CD8-positive, alpha-beta T cell (primary cell): ENCODE measurements at regions of chr16 and their contacts with region 1.

Region 1: GRCh38 chr16:1420111-1420540 is 421 bp downstream of the UQCC4 start:
- DNase-seq: peak in 1 of 9 experiments; percentile 16
- ATAC-seq: no peak
- H3K4me3 ChIP-seq: peak overlapping the region; percentile 85 to 95
- H3K4me3 Mint-ChIP-seq: peak overlapping the region; percentile 92
- H3K27ac ChIP-seq: peak overlapping the region; percentile 81 to 98
- H3K27ac Mint-ChIP-seq: peak overlapping the region; percentile 76
- H3K4me1 ChIP-seq: peaks cover 19% of the 10 kb centered on the region
- H3K4me1 Mint-ChIP-seq: peaks cover 29% of the 10 kb centered on the region
- H3K27me3 ChIP-seq: no peaks in the 10 kb centered on the region
- H3K27me3 Mint-ChIP-seq: no peaks in the 10 kb centered on the region
- CTCF ChIP-seq: no peak

Region 2: GRCh38 chr16:9903-10665 is 1410.0 kb before region 1 on chr16:
- CTCF ChIA-PET with region 1: no interaction called
- POLR2A ChIA-PET with region 1: no interaction called
- intact Hi-C with region 1: no loop called
- DNase-seq: peak in 3 of 9 experiments; percentile 25 to 40 (median 28)
- ATAC-seq: peak; percentile 88
- H3K4me3 ChIP-seq: peak overlapping the region in 1 of 2 experiments; percentile 29
- H3K4me3 Mint-ChIP-seq: peak overlapping the region; percentile 45
- H3K27ac ChIP-seq: no peak overlapping the region
- H3K27ac Mint-ChIP-seq: no peak overlapping the region
- H3K4me1 ChIP-seq: no peaks in the 10 kb centered on the region
- H3K4me1 Mint-ChIP-seq: no peaks in the 10 kb centered on the region
- H3K27me3 ChIP-seq: no peaks in the 10 kb centered on the region
- H3K27me3 Mint-ChIP-seq: no peaks in the 10 kb centered on the region
- CTCF ChIP-seq: no peak

Region 3: DNA sequence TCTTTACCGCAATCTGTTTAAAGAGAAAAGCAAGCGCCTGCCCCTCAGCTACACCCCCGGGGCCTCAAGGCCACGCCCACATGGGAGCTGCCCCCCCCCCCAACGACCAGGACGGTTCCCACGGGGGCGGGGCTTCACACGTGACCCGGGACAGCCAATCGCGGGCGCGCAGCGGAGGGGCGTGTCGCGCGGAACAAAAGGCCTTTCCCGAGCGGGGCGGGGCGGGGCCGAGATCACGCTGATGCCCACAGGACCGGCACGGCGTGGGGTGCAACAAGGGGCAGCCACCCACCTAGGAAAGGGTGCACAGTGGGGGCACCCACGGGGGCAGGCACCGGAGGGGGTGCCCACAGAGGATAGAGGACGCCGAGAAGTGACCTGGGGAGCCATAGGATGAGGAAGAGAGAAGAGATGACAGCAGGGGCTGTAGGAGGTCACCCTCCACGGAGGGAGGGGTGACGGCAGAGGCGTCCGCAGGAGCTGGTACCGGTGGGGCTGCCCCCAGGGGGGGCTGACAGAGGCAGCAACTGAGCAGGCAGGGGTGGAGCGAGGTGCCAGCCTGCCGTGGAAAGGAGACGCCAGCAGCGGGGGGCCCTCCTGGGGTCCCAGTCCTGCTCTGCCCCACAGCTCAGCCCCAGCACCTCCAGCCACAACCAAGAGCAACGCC is 11.8 kb before region 1 on chr16:
- CTCF ChIA-PET with region 1: no interaction called
- POLR2A ChIA-PET with region 1: interaction called, 5 read pairs
- intact Hi-C with region 1: loop called in 1 of 2 experiments (anchors 1 kb)
- DNase-seq: peak; percentile 92 to 99 (median 97)
- ATAC-seq: peak; percentile 91
- H3K4me3 ChIP-seq: peak overlapping the region; percentile 51 to 62
- H3K4me3 Mint-ChIP-seq: peak overlapping the region; percentile 75
- H3K27ac ChIP-seq: peak overlapping the region in 1 of 2 experiments; percentile 58
- H3K27ac Mint-ChIP-seq: no peak overlapping the region
- H3K4me1 ChIP-seq: peaks cover 22% of the 10 kb centered on the region
- H3K4me1 Mint-ChIP-seq: peaks cover 32% of the 10 kb centered on the region
- H3K27me3 ChIP-seq: no peaks in the 10 kb centered on the region
- H3K27me3 Mint-ChIP-seq: no peaks in the 10 kb centered on the region
- CTCF ChIP-seq: no peak

Region 4: DNA sequence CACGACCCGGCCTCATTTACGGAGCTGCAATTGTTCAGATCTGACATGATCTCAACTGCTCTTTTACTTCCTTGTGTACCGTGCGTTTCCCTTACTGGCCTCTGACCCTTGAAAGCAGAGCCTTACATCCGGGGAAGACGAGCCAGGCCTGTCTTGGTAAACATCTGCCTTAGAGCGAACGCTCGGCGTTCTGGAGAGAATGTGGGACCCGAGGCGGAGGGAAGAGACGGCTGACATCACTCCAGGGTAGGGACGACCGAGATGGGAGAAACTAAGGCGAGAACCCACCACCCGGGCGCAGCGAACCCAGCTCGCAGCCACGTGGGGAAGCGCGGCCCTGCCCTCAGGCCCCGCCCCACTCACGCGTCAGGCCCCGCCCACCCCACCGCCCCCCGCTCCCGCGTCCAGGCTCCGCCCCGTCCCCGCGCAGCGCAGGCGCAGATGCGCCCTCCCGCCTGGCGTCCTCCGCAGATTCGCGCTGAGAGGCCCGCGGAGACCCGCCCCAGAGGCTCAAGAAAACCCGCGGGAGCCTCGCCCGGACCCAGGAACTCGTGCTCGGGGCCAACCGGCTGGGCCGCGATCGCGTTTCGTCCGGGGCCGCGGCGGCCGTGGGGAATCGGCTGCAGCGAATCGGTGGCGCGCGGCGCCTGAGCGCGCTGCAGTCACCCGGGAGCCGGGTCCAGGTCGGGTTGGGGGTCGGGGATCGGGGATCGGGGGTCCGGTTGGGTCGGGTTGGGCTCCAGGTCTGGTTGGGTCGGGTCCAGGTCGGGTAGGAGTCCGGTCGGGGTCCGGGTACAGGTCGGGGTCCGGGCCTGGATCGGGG is 73.0 kb after region 1 on chr16 and contains the start of gene TELO2:
- CTCF ChIA-PET with region 1: interaction called, 3 read pairs
- POLR2A ChIA-PET with region 1: interaction called, 9 read pairs
- intact Hi-C with region 1: loop called (anchors 1 to 2 kb)
- DNase-seq: peak; percentile 75 to 93 (median 85)
- ATAC-seq: peak; percentile 94
- H3K4me3 ChIP-seq: peak within 1 kb of the TSS; percentile 68 to 87
- H3K4me3 Mint-ChIP-seq: peak within 1 kb of the TSS; percentile 95
- H3K27ac ChIP-seq: peak within 1 kb of the TSS; percentile 93 to 96
- H3K27ac Mint-ChIP-seq: peak within 1 kb of the TSS; percentile 100
- H3K4me1 ChIP-seq: peaks cover 16% of the 10 kb centered on the region
- H3K4me1 Mint-ChIP-seq: peaks cover 11% of the 10 kb centered on the region
- H3K27me3 ChIP-seq: no peaks in the 10 kb centered on the region
- H3K27me3 Mint-ChIP-seq: no peaks in the 10 kb centered on the region
- CTCF ChIP-seq: no peak
- total RNA-seq, gene TELO2: 23.0 to 23.6 TPM

Region 5: DNA sequence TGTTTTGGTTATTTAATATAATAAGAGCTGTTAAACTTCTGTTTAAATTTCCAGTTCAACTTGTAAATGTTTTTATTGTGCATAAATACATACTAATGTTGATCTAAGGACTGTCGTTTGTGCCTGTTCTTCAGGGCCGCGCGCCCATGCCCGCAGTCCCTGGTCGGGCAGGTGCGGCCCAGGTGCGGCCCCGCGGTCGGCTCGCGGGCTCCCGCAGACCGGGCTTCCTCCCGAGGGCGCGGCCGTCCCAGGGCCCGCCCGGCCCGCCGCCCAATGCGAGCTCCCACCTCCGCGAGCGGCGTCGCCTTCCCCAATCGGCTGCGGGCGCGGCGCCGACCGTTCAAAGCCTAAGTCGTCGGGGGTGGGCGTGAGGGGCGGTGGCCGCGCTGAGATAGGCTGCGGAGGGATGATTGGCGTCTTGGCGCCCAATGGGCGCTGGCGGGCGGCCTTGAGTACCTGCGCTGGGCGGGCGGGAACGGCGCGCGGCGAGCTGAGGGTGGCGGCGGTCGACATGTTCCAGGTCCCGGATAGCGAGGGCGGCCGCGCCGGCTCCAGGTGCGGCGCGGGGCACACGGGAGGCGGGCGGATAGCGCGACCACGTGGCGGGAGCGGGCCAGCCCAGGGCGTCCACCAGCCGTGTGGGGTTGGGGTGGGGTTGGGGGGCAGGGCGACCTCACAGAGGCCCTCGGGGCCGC is 257.8 kb after region 1 on chr16 and contains the start of gene JPT2:
- CTCF ChIA-PET with region 1: no interaction called
- POLR2A ChIA-PET with region 1: interaction called, 5 read pairs
- intact Hi-C with region 1: loop called in 1 of 2 experiments (anchors 1 kb)
- DNase-seq: peak; percentile 87 to 98 (median 95)
- ATAC-seq: peak; percentile 97
- H3K4me3 ChIP-seq: peak within 1 kb of the TSS; percentile 54 to 57
- H3K4me3 Mint-ChIP-seq: peak within 1 kb of the TSS; percentile 88
- H3K27ac ChIP-seq: peak within 1 kb of the TSS; percentile 31 to 37
- H3K27ac Mint-ChIP-seq: peak within 1 kb of the TSS; percentile 62
- H3K4me1 ChIP-seq: peaks cover 15% of the 10 kb centered on the region
- H3K4me1 Mint-ChIP-seq: peaks cover 27% of the 10 kb centered on the region
- H3K27me3 ChIP-seq: no peaks in the 10 kb centered on the region
- H3K27me3 Mint-ChIP-seq: no peaks in the 10 kb centered on the region
- CTCF ChIP-seq: no peak
- total RNA-seq, gene JPT2: 1.4 to 2.8 TPM

Region 6: DNA sequence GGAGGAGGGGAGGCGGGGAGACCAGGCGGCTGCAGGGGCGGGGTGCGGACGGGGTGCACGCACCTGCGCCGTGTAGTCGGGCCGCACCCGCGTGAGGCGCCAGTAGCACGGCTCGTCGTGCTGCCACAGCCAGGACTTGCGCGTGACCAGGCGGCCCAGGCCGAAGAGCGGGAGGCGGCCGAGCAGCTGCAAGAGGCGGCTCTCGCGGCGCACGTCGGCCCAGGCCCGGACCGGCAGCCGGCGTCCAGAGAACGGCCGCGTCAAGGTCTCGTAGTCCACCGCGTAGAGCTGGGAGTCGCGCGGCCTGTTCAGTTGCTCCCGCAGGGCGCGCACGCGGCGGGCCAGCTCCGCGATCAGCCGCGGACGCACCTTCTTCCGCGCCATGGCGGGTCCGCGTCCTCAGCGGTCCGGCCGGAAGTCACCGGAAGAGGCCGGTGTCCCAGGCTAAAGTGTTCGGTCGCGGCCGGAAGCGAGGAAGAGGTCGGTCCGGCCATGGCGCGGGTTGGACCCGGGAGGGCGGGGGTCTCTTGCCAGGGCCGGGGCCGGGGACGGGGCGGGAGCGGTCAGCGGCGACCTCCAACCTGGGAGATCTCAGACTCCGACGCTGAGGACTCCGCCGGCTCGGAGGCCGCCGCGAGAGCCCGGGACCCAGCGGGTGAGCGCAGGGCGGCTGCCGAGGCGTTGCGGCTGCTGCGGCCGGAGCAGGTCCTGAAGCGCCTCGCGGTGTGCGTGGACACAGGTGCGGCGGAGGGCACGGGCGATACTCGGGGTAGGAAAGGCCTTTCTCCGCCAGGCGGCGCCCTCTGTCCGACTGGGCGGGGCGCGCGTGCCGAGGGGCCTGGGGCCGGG is 352.8 kb after region 1 on chr16 and contains the starts of genes EME2 and MRPS34:
- CTCF ChIA-PET with region 1: no interaction called
- POLR2A ChIA-PET with region 1: interaction called, 4 read pairs
- intact Hi-C with region 1: loop called (anchors 2 to 5 kb)
- DNase-seq: peak; percentile 54 to 89 (median 78)
- ATAC-seq: peak; percentile 48
- H3K4me3 ChIP-seq: peak within 1 kb of the TSS; percentile 79 to 91
- H3K4me3 Mint-ChIP-seq: peak within 1 kb of the TSS; percentile 96
- H3K27ac ChIP-seq: peak within 1 kb of the TSS; percentile 57 to 66
- H3K27ac Mint-ChIP-seq: peak within 1 kb of the TSS; percentile 96
- H3K4me1 ChIP-seq: peaks cover 30% of the 10 kb centered on the region
- H3K4me1 Mint-ChIP-seq: peaks cover 19% of the 10 kb centered on the region
- H3K27me3 ChIP-seq: no peaks in the 10 kb centered on the region
- H3K27me3 Mint-ChIP-seq: no peaks in the 10 kb centered on the region
- CTCF ChIP-seq: peak; percentile 92
- total RNA-seq, gene EME2: 27.5 to 31.7 TPM
- total RNA-seq, gene MRPS34: 18.9 to 21.4 TPM

Region 7: DNA sequence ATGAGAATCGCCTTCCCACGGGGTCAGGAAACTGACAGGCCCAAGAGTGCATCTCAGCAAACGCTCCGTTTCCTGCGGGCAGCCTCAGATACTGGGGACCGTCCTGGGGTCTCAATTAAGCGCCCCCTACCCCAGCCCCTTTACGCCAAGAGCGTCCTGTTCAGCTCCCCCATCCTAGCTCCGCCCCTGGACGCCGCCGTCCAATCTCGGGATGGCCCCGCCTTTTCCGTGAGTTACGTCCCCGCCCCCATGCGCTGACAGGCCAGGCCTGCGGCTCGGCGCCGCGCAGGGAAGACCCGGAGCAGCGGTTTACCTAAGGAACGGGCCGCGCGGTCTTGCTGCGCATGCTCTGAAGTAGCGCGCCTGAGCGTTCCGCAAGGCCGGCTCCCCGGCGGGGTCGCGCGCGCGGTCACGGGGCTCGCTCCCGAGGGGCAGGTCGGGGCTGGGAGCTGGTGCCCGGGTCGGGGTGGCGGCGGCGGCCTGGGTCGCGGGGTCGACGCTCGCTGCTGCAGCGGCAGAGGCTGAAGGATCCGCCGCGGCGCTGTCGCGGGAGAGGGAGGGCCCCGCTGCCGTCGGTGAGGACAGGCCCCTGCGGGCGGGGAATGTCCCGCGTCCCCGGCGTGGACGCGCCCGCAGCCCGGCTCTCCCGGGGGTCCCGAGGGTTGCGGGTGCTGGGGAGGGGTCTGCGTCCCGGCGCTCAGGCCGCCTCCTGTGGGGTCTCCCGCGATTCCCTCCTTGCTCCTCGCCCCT is 1491.6 kb after region 1 on chr16 and contains the start of gene FLYWCH1:
- CTCF ChIA-PET with region 1: no interaction called
- POLR2A ChIA-PET with region 1: no interaction called
- intact Hi-C with region 1: no loop called
- DNase-seq: peak; percentile 95 to 100 (median 99)
- ATAC-seq: peak; percentile 99
- H3K4me3 ChIP-seq: peak within 1 kb of the TSS; percentile 64 to 66
- H3K4me3 Mint-ChIP-seq: peak within 1 kb of the TSS; percentile 94
- H3K27ac ChIP-seq: peak within 1 kb of the TSS; percentile 59 to 71
- H3K27ac Mint-ChIP-seq: peak within 1 kb of the TSS; percentile 87
- H3K4me1 ChIP-seq: peaks cover 12% of the 10 kb centered on the region
- H3K4me1 Mint-ChIP-seq: peaks cover 21% of the 10 kb centered on the region
- H3K27me3 ChIP-seq: peaks cover 0 to 2% of the 10 kb centered on the region in 2 experiments
- H3K27me3 Mint-ChIP-seq: no peaks in the 10 kb centered on the region
- CTCF ChIP-seq: no peak
- total RNA-seq, gene FLYWCH1: 89.1 to 92.6 TPM